T-cell (primary cell): ENCODE measurements at regions of chr19 and their contacts with region 1.

Region 1: GRCh38 chr19:17854061-17854460 is 5.6 kb upstream of the RPL18A start:
- DNase-seq: no peak
- ATAC-seq: no peak
- H3K4me3 ChIP-seq: no peak overlapping the region
- H3K4me3 Mint-ChIP-seq: no peak overlapping the region
- H3K27ac ChIP-seq: no peak overlapping the region
- H3K27ac Mint-ChIP-seq: no peak overlapping the region
- H3K4me1 ChIP-seq: peaks cover 9 to 38% of the 10 kb centered on the region in 2 experiments
- H3K4me1 Mint-ChIP-seq: peaks cover 31 to 32% (median 32%) of the 10 kb centered on the region in 3 donors
- H3K27me3 ChIP-seq: no peaks in the 10 kb centered on the region
- H3K27me3 Mint-ChIP-seq: no peaks in the 10 kb centered on the region

Region 2: DNA sequence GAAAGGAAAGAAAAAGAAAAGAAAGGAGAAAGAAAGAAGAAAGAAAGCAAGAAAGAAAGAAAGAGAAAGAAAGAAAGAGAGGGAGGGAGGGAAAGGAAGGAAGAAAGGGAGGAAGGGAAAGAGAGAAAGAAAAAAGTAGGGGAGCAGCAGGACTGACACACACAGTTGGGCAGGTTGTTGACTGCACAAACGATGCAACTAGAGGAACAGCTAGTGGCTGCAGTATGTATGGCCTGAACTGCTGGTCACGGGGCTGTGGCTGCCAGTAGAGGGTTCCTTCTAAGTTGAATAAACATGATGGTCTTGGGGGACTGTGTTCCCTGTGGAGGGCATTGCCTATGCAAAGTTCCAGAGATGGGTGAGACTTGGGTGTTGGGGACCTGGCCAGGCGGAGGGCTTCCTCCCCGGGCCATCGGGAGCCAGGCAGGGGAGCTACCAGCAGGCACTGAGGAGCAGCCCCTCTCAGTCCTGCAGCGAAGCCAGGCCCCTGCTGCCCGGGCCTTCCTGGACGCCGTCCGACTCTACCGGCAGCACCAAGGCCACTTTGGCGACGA is 315.3 kb before region 1 on chr19:
- CTCF ChIA-PET with region 1: no interaction called
- POLR2A ChIA-PET with region 1: no interaction called
- DNase-seq: peak in 1 of 35 experiments; percentile 19
- ATAC-seq: no peak
- H3K4me3 ChIP-seq: peak overlapping the region; percentile 25 to 57
- H3K4me3 Mint-ChIP-seq: peak overlapping the region; percentile 55 to 88 (median 69)
- H3K27ac ChIP-seq: no peak overlapping the region
- H3K27ac Mint-ChIP-seq: no peak overlapping the region
- H3K4me1 ChIP-seq: peaks cover 4 to 17% of the 10 kb centered on the region in 2 experiments
- H3K4me1 Mint-ChIP-seq: peaks cover 11 to 18% (median 18%) of the 10 kb centered on the region in 3 donors
- H3K27me3 ChIP-seq: peaks cover 0 to 2% of the 10 kb centered on the region in 2 experiments
- H3K27me3 Mint-ChIP-seq: no peaks in the 10 kb centered on the region

Region 3: GRCh38 chr19:18496167-18496979 is 642.3 kb after region 1 on chr19:
- CTCF ChIA-PET with region 1: interaction called in 1 of 2 experiments, 10 read pairs
- POLR2A ChIA-PET with region 1: no interaction called
- DNase-seq: peak in 34 of 35 experiments; percentile 38 to 88 (median 60)
- ATAC-seq: peak; percentile 90 to 95 (median 92)
- H3K4me3 ChIP-seq: peak overlapping the region; percentile 26 to 27
- H3K4me3 Mint-ChIP-seq: peak overlapping the region; percentile 63 to 76 (median 65)
- H3K27ac ChIP-seq: peak overlapping the region; percentile 98
- H3K27ac Mint-ChIP-seq: peak overlapping the region; percentile 71 to 81
- H3K4me1 ChIP-seq: peaks cover 16 to 98% of the 10 kb centered on the region in 2 experiments
- H3K4me1 Mint-ChIP-seq: peaks cover 62 to 88% (median 85%) of the 10 kb centered on the region in 3 donors
- H3K27me3 ChIP-seq: no peaks in the 10 kb centered on the region
- H3K27me3 Mint-ChIP-seq: no peaks in the 10 kb centered on the region